ENCODE measurements at regions of chrX and their contacts with region 1.

Region 1: GRCh38 chrX:131068945-131069719 is 11.0 kb downstream of the ARHGAP36 start:
- DNase-seq: peak; percentile 10
- ATAC-seq: peak; percentile 92
- H3K4me3 ChIP-seq: no peak overlapping the region
- H3K27ac ChIP-seq: no peak overlapping the region
- H3K4me1 ChIP-seq: no peaks in the 10 kb centered on the region
- H3K27me3 ChIP-seq: 0 out of 5 replicates have a peak, but pooled peaks cover 0 to 4% of the 10 kb centered on the region in 2 experiments
- CTCF ChIP-seq: peak; percentile 67
- EP300 ChIP-seq: no peak
- POLR2A ChIP-seq: no peak
- RAD21 ChIP-seq: no peak

Region 2: DNA sequence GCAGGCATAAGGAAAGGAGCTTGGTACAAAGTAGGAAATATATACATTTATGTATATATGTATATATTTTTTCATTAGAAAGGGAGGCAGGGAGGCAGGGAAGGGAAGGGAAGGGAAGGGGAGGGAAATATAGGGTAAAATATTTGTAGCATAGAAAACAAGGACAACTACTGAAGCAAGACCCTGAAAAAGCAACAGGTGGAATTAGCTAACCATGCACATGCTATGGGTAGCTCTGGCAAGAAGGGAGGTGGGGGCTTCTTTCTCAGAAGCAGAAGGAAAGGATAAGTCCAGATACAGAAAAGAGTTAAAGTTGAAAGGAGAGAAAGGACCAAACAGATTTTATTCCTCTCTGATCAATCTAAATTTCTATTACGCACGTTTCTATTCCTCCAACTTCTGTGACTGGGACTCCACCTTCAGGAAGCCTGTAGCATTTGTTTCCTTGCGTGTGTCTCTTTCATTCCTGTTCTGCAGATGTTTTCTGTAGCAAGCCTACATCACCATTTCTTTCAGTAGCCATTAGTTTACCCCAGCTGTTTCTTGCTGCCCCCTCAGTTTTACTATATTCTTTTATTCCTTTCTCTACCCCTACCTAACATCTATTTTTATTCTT is 557.7 kb after region 1 on chrX:
- CTCF ChIA-PET with region 1: no interaction called
- POLR2A ChIA-PET with region 1: no interaction called
- in situ Hi-C with region 1: loop called (anchors 10 kb)
- intact Hi-C with region 1: no loop called
- DNase-seq: no peak
- ATAC-seq: no peak
- H3K4me3 ChIP-seq: no peak overlapping the region
- H3K27ac ChIP-seq: no peak overlapping the region
- H3K4me1 ChIP-seq: no peaks in the 10 kb centered on the region
- H3K27me3 ChIP-seq: no peaks in the 10 kb centered on the region
- CTCF ChIP-seq: peak; percentile 17; the same call in 1 of the 2 replicates
- EP300 ChIP-seq: no peak
- POLR2A ChIP-seq: no peak
- RAD21 ChIP-seq: no peak